ENCODE measurements at regions of chr2 and their contacts with region 1.

Region 1: GRCh38 chr2:99569386-99569785 is 79.6 kb upstream of the REV1 start:
- DNase-seq: no peak
- ATAC-seq: no peak
- H3K4me3 ChIP-seq: no peak overlapping the region
- H3K27ac ChIP-seq: no peak overlapping the region
- H3K4me1 ChIP-seq: peaks cover 0 to 7% of the 10 kb centered on the region in 2 donors
- H3K27me3 ChIP-seq: no peaks in the 10 kb centered on the region
- CTCF ChIP-seq: no peak
- POLR2A ChIP-seq: no peak

Region 2: GRCh38 chr2:100235098-100235497 is 665.7 kb after region 1 on chr2:
- in situ Hi-C with region 1: loop called in 1 of 4 experiments (anchors 10 kb)
- intact Hi-C with region 1: no loop called
- DNase-seq: no peak
- ATAC-seq: no peak
- H3K4me3 ChIP-seq: no peak overlapping the region
- H3K27ac ChIP-seq: no peak overlapping the region
- H3K4me1 ChIP-seq: no peaks in the 10 kb centered on the region
- H3K27me3 ChIP-seq: no peaks in the 10 kb centered on the region
- CTCF ChIP-seq: no peak
- POLR2A ChIP-seq: no peak